Activated CD4-positive, alpha-beta T cell treated with anti-CD3 and anti-CD28 coated beads for 36 hours (primary cell): ENCODE measurements at regions of chr12 and their contacts with region 1.

Region 1: GRCh38 chr12:116060764-116061163 is 216.7 kb downstream of the MED13L start:
- DNase-seq: no peak
- ATAC-seq: peak; percentile 91
- H3K4me3 Mint-ChIP-seq: peak overlapping the region; percentile 57
- H3K27ac Mint-ChIP-seq: peak overlapping the region; percentile 91
- H3K4me1 Mint-ChIP-seq: peaks cover 51% of the 10 kb centered on the region
- H3K27me3 Mint-ChIP-seq: no peaks in the 10 kb centered on the region

Region 2: DNA sequence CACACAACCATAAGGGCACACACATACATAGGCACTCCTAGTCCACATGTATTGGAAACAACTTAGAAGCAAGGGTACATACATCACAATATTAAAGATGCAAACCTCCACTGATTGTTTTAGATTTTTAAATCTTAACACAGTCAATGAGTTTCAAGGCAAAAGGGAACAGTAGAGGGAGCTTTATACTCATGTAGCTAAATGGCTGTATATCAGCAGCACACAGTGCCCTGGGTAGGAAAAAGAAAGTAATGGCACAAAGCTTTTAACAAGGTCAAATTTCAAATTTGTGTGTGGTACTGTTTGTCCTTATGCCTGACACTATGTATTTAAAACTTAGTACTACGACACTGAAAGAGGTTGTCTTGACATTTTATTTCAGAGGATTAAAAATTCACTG is 45.2 kb before region 1 on chr12:
- CTCF ChIA-PET with region 1: interaction called, 3 read pairs
- POLR2A ChIA-PET with region 1: no interaction called
- intact Hi-C with region 1: loop called in 1 of 2 experiments (anchors 5 kb)
- DNase-seq: no peak
- ATAC-seq: peak; percentile 81
- H3K4me3 Mint-ChIP-seq: no peak overlapping the region
- H3K27ac Mint-ChIP-seq: peak overlapping the region; percentile 23
- H3K4me1 Mint-ChIP-seq: peaks cover 5% of the 10 kb centered on the region
- H3K27me3 Mint-ChIP-seq: no peaks in the 10 kb centered on the region

Region 3: GRCh38 chr12:116080415-116080814 is 19.7 kb after region 1 on chr12:
- CTCF ChIA-PET with region 1: interaction called, 7 read pairs
- POLR2A ChIA-PET with region 1: interaction called, 3 read pairs
- intact Hi-C with region 1: loop called in 1 of 2 experiments (anchors 2 kb)
- DNase-seq: no peak
- ATAC-seq: peak; percentile 95
- H3K4me3 Mint-ChIP-seq: no peak overlapping the region
- H3K27ac Mint-ChIP-seq: no peak overlapping the region
- H3K4me1 Mint-ChIP-seq: peaks cover 32% of the 10 kb centered on the region
- H3K27me3 Mint-ChIP-seq: no peaks in the 10 kb centered on the region

Region 4: DNA sequence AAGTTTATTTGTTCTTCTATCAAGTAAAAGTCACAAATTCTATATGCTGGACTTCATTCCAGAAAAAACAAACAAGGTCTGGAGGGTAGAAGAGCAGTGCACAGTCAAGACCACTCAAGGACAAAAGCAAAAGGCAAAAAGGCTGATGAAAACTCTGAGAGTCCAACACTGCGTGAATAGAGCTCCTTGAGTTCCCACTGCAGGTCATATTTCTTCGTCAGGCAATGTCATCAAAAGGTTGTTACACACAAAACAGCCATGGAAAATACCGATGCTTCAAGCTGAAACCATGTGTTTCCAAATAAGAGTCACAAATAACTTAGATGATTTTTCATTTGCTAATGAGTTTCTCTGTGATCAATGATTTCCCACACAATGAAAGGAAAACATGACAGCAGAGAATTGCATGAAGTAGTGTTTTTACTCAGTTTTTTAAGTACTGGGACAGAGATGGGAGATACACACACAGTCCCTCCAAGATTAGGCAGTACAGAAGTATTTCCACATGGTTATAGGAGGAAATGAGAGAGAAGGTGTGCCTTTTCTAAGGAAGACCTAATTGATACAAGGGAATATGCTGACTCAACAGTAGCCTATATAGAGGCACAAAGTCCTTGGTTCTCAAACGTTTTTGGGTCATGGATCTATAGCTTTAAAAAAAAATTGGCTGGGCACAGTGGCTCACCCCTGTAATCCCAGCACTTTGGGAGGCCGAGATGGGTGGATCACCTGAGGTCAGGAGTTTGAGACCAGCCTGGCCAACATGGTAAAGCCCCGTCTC is 39.1 kb after region 1 on chr12:
- CTCF ChIA-PET with region 1: no interaction called
- POLR2A ChIA-PET with region 1: no interaction called
- intact Hi-C with region 1: loop called in 1 of 2 experiments (anchors 2 kb)
- DNase-seq: peak; percentile 22
- ATAC-seq: peak; percentile 89
- H3K4me3 Mint-ChIP-seq: no peak overlapping the region
- H3K27ac Mint-ChIP-seq: peak overlapping the region; percentile 69
- H3K4me1 Mint-ChIP-seq: peaks cover 35% of the 10 kb centered on the region
- H3K27me3 Mint-ChIP-seq: no peaks in the 10 kb centered on the region

Region 5: DNA sequence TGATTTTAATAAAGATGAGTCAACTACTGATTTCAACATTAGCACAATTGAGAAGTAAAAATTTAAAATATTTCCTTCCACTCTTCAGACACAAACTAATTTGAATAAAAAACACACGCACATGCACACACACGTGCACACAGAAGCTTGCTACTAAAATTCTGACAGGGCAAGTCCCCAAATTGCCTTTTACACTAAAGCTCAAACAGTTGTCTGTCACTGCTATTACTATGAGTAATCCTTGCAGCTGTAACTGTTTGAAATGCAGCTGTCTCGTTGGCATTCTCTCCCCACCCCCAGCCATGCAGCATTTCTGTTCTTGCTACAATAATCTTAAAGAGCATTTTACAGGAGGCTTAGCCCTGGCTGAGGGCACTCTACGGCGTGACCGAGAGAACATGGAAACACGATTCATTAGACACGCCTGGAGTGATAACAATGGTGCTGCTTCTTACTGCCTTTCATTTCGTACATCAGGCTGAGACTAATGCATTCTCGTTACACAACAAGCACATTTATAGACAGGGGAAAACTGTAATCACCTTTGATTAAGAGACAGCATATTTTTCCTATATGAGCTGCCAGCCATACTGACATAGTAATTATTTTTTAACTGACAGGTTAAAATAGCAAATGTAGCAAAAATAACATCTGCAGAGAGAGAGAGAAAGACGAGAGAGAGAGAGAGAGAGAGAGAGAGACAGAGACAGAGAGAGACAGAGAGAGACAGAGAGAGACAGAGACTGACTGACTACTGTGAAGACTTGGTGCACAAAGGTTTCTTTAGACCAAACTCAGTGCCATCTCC is 62.9 kb after region 1 on chr12:
- CTCF ChIA-PET with region 1: no interaction called
- POLR2A ChIA-PET with region 1: interaction called, 4 read pairs
- intact Hi-C with region 1: loop called in 1 of 2 experiments (anchors 5 kb)
- DNase-seq: peak; percentile 73
- ATAC-seq: peak; percentile 85
- H3K4me3 Mint-ChIP-seq: peak overlapping the region; percentile 19
- H3K27ac Mint-ChIP-seq: peak overlapping the region; percentile 16
- H3K4me1 Mint-ChIP-seq: peaks cover 68% of the 10 kb centered on the region
- H3K27me3 Mint-ChIP-seq: no peaks in the 10 kb centered on the region

Region 6: GRCh38 chr12:116369921-116370404 is 309.2 kb after region 1 on chr12:
- CTCF ChIA-PET with region 1: no interaction called
- POLR2A ChIA-PET with region 1: no interaction called
- intact Hi-C with region 1: no loop called
- DNase-seq: no peak
- ATAC-seq: no peak
- H3K4me3 Mint-ChIP-seq: no peak overlapping the region
- H3K27ac Mint-ChIP-seq: no peak overlapping the region
- H3K4me1 Mint-ChIP-seq: no peaks in the 10 kb centered on the region
- H3K27me3 Mint-ChIP-seq: no peaks in the 10 kb centered on the region